Endothelial cell of umbilical vein (primary cell): ENCODE measurements at regions of chr7 and their contacts with region 1.

Region 1: DNA sequence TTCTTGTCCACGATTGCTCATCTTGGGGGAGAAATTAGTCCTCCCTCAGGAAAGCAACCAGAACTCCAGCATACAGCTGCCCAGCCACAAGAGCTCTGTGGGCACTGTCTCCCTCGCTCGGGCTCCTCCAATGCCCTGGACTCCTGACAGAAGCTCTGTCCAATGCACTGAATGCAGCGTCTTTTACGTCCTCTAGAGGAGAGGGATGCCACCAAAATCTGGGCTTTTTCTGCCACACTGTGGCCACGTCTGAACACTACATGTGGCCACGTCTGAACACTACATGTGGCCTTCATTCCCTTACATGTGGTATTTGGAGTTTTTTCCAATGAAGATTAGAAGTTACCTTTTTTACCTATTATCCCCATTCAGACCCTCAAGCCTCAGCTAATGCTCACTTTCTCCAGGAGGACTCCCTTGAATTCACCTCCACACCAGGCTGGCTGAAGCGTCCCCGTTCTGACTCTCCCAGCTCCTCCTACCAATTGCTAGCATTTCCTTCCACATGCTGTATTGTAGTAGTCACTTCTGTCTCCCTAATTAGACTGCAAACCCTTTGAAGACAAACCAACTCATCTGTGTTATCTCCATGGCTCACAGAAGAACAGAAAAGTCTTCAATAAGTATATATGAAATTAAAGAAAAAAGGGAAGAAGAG is 134.3 kb upstream of the PDE1C start:
- DNase-seq: peak; percentile 70
- H3K4me3 ChIP-seq: no peak overlapping the region
- H3K27ac ChIP-seq: no peak overlapping the region
- H3K4me1 ChIP-seq: no peaks in the 10 kb centered on the region
- H3K27me3 ChIP-seq: peaks cover 0 to 4% of the 10 kb centered on the region in 2 experiments
- CTCF ChIP-seq: peak; percentile 59 to 67
- POLR2A ChIP-seq: no peak

Region 2: DNA sequence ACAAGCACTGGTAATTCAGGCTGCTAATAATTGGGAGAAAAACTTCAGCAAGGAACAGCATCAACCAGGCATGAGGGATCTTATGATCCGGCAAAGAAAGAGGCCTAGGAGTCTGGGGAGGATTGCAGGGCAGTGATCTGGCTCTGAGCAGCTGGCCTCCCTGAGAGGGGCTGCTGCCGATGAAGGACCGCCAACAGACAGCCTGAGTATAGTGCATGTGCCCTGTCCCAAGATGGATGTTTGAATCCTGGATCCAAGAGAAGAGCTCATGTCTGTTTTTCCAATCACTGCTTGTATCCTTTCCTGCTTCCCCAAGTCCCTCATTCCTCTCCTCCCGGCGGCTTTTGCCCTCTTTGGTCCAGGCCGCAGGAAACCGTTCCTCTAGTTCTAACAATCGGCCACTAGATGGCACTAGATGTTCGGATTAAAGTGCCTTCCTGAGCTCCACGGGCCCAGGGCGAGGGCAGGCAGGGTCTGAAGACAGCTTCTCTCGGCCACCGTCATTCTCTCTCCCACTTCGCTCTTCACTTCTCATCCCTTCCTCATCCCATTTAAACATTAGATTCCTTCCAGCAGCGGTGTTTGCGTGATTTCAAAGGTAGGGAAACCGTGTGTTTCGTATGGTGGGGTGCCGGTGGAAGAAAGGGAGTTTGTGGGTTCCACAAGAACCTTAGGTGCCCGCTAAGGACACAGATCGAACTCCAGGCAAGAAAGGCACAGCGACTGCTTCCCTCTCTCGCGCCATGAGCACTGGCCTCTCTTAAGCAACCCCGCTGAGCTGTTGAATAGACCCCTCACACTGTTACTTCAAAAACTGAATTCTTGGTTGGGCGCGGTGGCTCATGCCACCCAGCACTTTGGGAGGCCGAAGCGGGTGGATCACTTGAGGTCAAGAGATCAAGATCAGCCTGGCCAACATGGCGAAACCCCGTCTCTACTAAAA is 1070.0 kb before region 1 on chr7:
- CTCF ChIA-PET with region 1: interaction called, 13 read pairs
- POLR2A ChIA-PET with region 1: no interaction called
- dilution Hi-C with region 1: no loop called
- intact Hi-C with region 1: no loop called
- DNase-seq: peak; percentile 58
- H3K4me3 ChIP-seq: no peak overlapping the region
- H3K27ac ChIP-seq: no peak overlapping the region
- H3K4me1 ChIP-seq: no peaks in the 10 kb centered on the region
- H3K27me3 ChIP-seq: no peaks in the 10 kb centered on the region
- CTCF ChIP-seq: peak; percentile 64 to 72
- POLR2A ChIP-seq: no peak

Region 3: GRCh38 chr7:31744294-31744874 is 460.1 kb before region 1 on chr7:
- CTCF ChIA-PET with region 1: interaction called, 109 read pairs
- POLR2A ChIA-PET with region 1: no interaction called
- dilution Hi-C with region 1: no loop called
- intact Hi-C with region 1: loop called (anchors 1 kb)
- DNase-seq: peak; percentile 79
- H3K4me3 ChIP-seq: no peak overlapping the region
- H3K27ac ChIP-seq: no peak overlapping the region
- H3K4me1 ChIP-seq: no peaks in the 10 kb centered on the region
- H3K27me3 ChIP-seq: peaks cover 3 to 5% of the 10 kb centered on the region in 2 experiments
- CTCF ChIP-seq: peak; percentile 63 to 71
- POLR2A ChIP-seq: no peak

Region 4: GRCh38 chr7:32140210-32140939 is 64.1 kb before region 1 on chr7:
- CTCF ChIA-PET with region 1: interaction called, 10 read pairs
- POLR2A ChIA-PET with region 1: no interaction called
- dilution Hi-C with region 1: no loop called
- intact Hi-C with region 1: loop called (anchors 1 kb)
- DNase-seq: no peak
- H3K4me3 ChIP-seq: no peak overlapping the region
- H3K27ac ChIP-seq: no peak overlapping the region
- H3K4me1 ChIP-seq: no peaks in the 10 kb centered on the region
- H3K27me3 ChIP-seq: peaks cover 2 to 3% of the 10 kb centered on the region in 2 experiments
- CTCF ChIP-seq: peak in 1 of 2 donors; percentile 11
- POLR2A ChIP-seq: no peak

Region 5: DNA sequence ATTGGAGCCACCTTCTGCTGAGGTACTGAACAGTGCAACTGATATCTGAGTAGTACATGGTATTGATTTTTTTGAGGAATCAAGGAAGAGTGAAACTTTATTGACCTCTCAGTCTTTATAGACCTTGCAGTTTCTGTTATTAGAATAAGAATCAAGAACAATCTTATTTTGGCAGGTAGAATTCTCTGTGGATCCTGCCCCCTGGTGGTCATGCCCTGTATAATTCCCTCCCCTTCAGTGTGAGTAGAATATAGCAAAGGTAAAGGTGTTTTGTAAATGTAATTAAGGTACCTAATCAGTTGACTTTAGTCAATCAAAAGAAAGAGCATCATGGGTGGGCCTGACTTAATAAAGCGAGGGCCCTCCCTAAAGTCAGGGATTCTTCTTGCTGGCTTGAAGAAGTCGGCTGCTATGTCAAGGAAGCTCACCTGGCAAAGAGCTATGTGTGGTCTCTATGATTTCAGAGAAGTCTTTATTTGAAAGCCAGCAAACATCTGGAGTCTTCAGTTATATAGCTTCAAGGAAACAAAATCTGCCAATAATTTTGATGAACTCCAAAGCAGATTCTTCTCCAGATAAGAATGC is 142.8 kb after region 1 on chr7:
- CTCF ChIA-PET with region 1: interaction called, 101 read pairs
- POLR2A ChIA-PET with region 1: no interaction called
- dilution Hi-C with region 1: no loop called
- intact Hi-C with region 1: no loop called
- DNase-seq: peak; percentile 40
- H3K4me3 ChIP-seq: no peak overlapping the region
- H3K27ac ChIP-seq: no peak overlapping the region
- H3K4me1 ChIP-seq: no peaks in the 10 kb centered on the region
- H3K27me3 ChIP-seq: no peaks in the 10 kb centered on the region
- CTCF ChIP-seq: peak; percentile 40 to 51
- POLR2A ChIP-seq: no peak